Activated naive CD4-positive, alpha-beta T cell treated with anti-CD3 and anti-CD28 coated beads for 36 hours (primary cell): ENCODE measurements at regions of chr1 and their contacts with region 1.

Region 1: GRCh38 chr1:206583707-206584648 is 28.3 kb downstream of the EIF2D start:
- DNase-seq: peak; percentile 95
- H3K4me3 Mint-ChIP-seq: peak overlapping the region; percentile 68
- H3K27ac Mint-ChIP-seq: peak overlapping the region; percentile 100
- H3K4me1 Mint-ChIP-seq: peaks cover 94% of the 10 kb centered on the region
- H3K27me3 Mint-ChIP-seq: no peaks in the 10 kb centered on the region

Region 2: DNA sequence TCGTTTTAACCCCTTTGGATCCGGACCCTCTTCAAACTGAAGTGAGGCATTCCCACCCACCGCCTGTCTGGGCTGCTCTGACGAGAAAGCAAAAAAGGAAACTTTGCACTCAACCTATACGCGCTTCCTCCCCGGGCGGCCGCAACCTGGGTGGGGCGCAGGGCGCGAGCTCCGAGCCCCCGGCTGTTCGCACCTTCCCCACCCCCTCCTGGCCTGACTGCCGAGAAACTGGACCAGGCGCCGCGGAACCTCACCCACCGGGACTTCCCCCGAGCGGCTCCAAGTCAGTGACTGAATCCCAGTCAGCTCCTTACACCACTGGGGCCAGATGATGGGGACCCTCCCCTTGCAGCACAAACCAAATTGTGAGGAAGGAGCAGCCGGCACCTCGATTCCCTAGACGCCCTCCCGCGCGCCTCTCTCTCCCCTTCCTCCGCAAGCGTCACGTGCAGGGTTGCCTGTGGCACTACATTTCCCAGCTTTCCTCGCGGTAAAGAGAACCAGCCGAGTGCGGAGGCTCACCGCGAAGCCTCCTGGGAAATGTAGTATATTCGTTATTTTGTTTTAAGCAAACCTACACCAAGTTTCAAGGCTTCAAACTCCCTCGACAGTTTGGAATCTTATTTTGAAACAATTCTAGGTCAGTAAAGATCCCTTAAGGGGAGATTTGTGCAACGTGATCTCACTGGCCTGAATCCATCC is 808.8 kb before region 1 on chr1 and contains the start of gene RAB29:
- CTCF ChIA-PET with region 1: no interaction called
- intact Hi-C with region 1: loop called (anchors 5 kb)
- DNase-seq: peak; percentile 93
- H3K4me3 Mint-ChIP-seq: peak within 1 kb of the TSS; percentile 83
- H3K27ac Mint-ChIP-seq: peak within 1 kb of the TSS; percentile 94
- H3K4me1 Mint-ChIP-seq: peaks cover 53% of the 10 kb centered on the region
- H3K27me3 Mint-ChIP-seq: no peaks in the 10 kb centered on the region
- total RNA-seq, gene RAB29: 25.0 TPM

Region 3: DNA sequence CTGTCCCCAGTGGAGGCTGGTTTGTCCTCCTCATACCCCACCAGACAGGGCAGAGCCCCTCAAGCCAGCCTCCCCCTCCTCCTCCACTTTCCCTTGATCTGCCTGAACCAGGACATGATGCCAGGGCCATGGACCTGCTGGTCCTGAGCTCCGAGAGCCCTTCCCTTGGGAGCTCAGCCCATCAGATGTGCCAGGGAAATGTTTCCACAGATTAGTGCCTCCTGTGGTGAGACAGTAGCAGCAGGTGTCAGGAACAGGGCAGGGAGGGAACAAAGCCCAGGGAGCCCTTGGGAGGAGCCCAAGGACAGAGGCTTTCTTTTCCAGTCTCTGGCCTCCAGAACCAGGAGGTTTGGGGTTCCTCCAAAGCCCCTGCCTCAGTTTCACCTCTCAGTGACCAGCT is 756.4 kb before region 1 on chr1:
- CTCF ChIA-PET with region 1: no interaction called
- intact Hi-C with region 1: no loop called
- DNase-seq: no peak
- H3K4me3 Mint-ChIP-seq: no peak overlapping the region
- H3K27ac Mint-ChIP-seq: no peak overlapping the region
- H3K4me1 Mint-ChIP-seq: peaks cover 22% of the 10 kb centered on the region
- H3K27me3 Mint-ChIP-seq: peaks cover 3% of the 10 kb centered on the region

Region 4: DNA sequence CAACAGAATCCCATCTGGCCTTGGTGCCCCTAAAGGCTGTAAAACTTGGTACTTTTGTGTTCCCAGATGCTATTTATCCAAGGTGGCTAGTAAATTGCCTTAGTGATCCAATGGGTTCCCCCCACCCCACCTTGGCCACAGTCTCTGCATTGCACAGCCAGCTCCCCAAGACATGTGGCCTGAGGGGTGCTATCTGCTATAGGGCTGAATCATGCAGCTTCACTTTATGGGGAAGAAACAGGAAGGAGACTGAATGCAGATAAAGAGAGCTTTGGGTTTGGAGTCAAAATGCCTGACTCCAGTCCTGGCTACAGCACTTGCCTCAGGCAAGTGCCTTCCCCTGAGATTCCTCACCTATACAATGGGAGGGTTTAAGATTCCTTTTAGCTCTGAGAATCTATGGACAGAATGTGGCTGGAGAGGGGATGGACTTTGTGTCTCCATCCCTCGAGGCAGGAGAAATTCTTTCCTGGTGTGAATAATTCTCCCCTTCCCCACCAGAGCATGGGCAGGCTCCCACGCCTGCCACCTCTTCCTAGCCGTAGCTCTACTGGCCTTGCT is 524.5 kb before region 1 on chr1:
- CTCF ChIA-PET with region 1: no interaction called
- intact Hi-C with region 1: no loop called
- DNase-seq: no peak
- H3K4me3 Mint-ChIP-seq: no peak overlapping the region
- H3K27ac Mint-ChIP-seq: no peak overlapping the region
- H3K4me1 Mint-ChIP-seq: no peaks in the 10 kb centered on the region
- H3K27me3 Mint-ChIP-seq: no peaks in the 10 kb centered on the region

Region 5: GRCh38 chr1:206479183-206480125 is 104.5 kb before region 1 on chr1:
- CTCF ChIA-PET with region 1: interaction called, 17 read pairs
- intact Hi-C with region 1: loop called (anchors 2 kb)
- DNase-seq: peak; percentile 85
- H3K4me3 Mint-ChIP-seq: no peak overlapping the region
- H3K27ac Mint-ChIP-seq: peak overlapping the region; percentile 67
- H3K4me1 Mint-ChIP-seq: peaks cover 35% of the 10 kb centered on the region
- H3K27me3 Mint-ChIP-seq: no peaks in the 10 kb centered on the region

Region 6: GRCh38 chr1:206544562-206545257 is 39.3 kb before region 1 on chr1:
- CTCF ChIA-PET with region 1: interaction called, 511 read pairs
- intact Hi-C with region 1: loop called (anchors 1 kb)
- DNase-seq: peak; percentile 89
- H3K4me3 Mint-ChIP-seq: no peak overlapping the region
- H3K27ac Mint-ChIP-seq: peak overlapping the region; percentile 70
- H3K4me1 Mint-ChIP-seq: peaks cover 19% of the 10 kb centered on the region
- H3K27me3 Mint-ChIP-seq: no peaks in the 10 kb centered on the region

Region 7: GRCh38 chr1:206612129-206612876 is 28.3 kb after region 1 on chr1 and contains the start of gene EIF2D:
- CTCF ChIA-PET with region 1: interaction called, 8 read pairs
- intact Hi-C with region 1: loop called (anchors 1 kb)
- DNase-seq: peak; percentile 95
- H3K4me3 Mint-ChIP-seq: peak within 1 kb of the TSS; percentile 92
- H3K27ac Mint-ChIP-seq: peak within 1 kb of the TSS; percentile 99
- H3K4me1 Mint-ChIP-seq: peaks cover 44% of the 10 kb centered on the region
- H3K27me3 Mint-ChIP-seq: no peaks in the 10 kb centered on the region
- total RNA-seq, gene EIF2D: 116 to 122 TPM

Region 8: GRCh38 chr1:207751790-207752455 is 1167.9 kb after region 1 on chr1 and contains the start of gene CD46:
- CTCF ChIA-PET with region 1: no interaction called
- intact Hi-C with region 1: loop called (anchors 10 kb)
- DNase-seq: peak; percentile 97
- H3K4me3 Mint-ChIP-seq: peak within 1 kb of the TSS; percentile 92
- H3K27ac Mint-ChIP-seq: peak within 1 kb of the TSS; percentile 98
- H3K4me1 Mint-ChIP-seq: peaks cover 59% of the 10 kb centered on the region
- H3K27me3 Mint-ChIP-seq: no peaks in the 10 kb centered on the region
- total RNA-seq, gene CD46: 91.0 to 93.4 TPM